Heart left ventricle (tissue), 16 donors: ENCODE measurements at regions of chr14 and their contacts with region 1.

Region 1: GRCh38 chr14:100547633-100548294 is 39.5 kb downstream of the BEGAIN start:
- DNase-seq: peak; percentile 30 to 84 (median 68)
- ATAC-seq: peak; percentile 50 to 80 (median 61)
- H3K4me3 ChIP-seq: peak overlapping the region in 1 of 12 donors; percentile 1
- H3K27ac ChIP-seq: peak overlapping the region in 2 of 12 donors; percentile 17 to 71
- H3K4me1 ChIP-seq: peaks cover 0 to 26% (median 8%) of the 10 kb centered on the region in 12 donors
- H3K27me3 ChIP-seq: peaks cover 0 to 8% (median 0%) of the 10 kb centered on the region in 9 donors
- CTCF ChIP-seq: no peak
- POLR2A ChIP-seq: no peak

Region 2: DNA sequence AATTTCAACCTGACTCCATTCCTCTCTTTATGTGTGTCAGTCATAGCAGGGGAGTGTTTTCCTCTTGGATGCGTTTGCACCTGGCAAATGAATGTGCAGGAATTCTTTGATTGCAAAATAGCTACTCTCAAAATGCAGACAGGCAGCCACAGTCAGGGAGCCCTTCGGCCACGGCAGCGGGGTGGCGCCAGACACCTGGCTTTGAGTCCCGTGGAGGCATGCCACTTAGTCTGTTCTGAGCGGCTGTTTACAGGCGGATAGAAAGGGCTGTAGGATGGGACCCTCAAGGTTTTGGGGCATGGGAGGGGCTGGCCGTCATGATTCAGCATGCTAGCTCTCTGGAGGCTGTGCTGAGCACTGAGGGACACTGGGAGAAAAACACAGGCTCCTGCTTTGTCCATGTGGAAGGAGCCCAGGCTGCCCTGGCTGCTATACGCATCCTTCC is 107.6 kb before region 1 on chr14:
- intact Hi-C with region 1: loop called in 1 of 10 experiments (anchors 5 kb)
- DNase-seq: peak; percentile 26 to 73 (median 67)
- ATAC-seq: peak; percentile 83 to 92 (median 88)
- H3K4me3 ChIP-seq: peak overlapping the region in 2 of 12 donors; percentile 4 to 28
- H3K27ac ChIP-seq: peak overlapping the region in 11 of 12 donors; percentile 8 to 72 (median 40)
- H3K4me1 ChIP-seq: peaks cover 0 to 23% (median 19%) of the 10 kb centered on the region in 12 donors
- H3K27me3 ChIP-seq: no peaks in the 10 kb centered on the region
- CTCF ChIP-seq: peak; percentile 23 to 78 (median 62)
- POLR2A ChIP-seq: no peak